ENCODE measurements at regions of chr3 and their contacts with region 1.

Region 1: DNA sequence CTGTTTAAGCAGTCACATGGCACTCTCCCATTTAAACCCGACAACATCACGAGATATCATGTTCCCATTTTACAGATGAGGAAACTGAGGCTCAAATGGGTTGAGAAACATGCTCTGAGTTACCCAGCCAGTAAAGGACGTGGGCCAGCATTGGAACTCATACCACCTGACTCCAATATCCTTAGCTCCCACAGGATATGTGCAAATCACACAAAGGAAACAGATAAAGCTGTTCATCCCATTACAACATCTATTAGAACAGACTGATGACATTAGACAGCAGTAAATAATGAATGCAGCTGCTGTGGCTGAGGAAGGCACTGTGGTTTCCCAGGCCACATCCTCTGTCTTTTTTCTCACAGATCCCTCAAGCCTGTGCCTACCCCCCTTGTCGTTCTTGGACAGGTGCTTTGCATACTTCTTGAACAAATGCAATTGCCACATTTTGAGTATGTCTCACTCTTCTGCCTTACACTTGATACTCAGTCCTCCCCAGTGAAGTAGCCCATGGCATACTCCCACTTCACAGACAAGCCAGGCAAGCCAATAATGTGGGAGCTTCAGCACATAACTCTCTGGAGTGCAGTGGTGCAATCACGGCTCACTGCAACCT is 17.7 kb downstream of the FRMD4B start:
- DNase-seq: no peak
- ATAC-seq: peak; percentile 22

Region 2: GRCh38 chr3:69330891-69331400 is 37.3 kb before region 1 on chr3:
- intact Hi-C with region 1: loop called (anchors 5 kb)
- DNase-seq: no peak
- ATAC-seq: peak; percentile 82

Region 3: GRCh38 chr3:69594286-69594685 is 226.1 kb after region 1 on chr3:
- intact Hi-C with region 1: no loop called
- DNase-seq: no peak
- ATAC-seq: no peak

Measured in Right ventricle myocardium inferior (tissue), 1 donor.